Activated naive CD4-positive, alpha-beta T cell treated with anti-CD3 and anti-CD28 coated beads for 36 hours (primary cell): ENCODE measurements at regions of chr11 and their contacts with region 1.

Region 1: GRCh38 chr11:76680518-76681425 is 10.2 kb upstream of the LRRC32 start:
- DNase-seq: peak; percentile 80
- H3K4me3 Mint-ChIP-seq: no peak overlapping the region
- H3K27ac Mint-ChIP-seq: no peak overlapping the region
- H3K4me1 Mint-ChIP-seq: peaks cover 2% of the 10 kb centered on the region
- H3K27me3 Mint-ChIP-seq: peaks cover 5% of the 10 kb centered on the region

Region 2: GRCh38 chr11:76419896-76420295 is 260.9 kb before region 1 on chr11:
- CTCF ChIA-PET with region 1: no interaction called
- intact Hi-C with region 1: loop called (anchors 2 kb)
- DNase-seq: peak; percentile 32
- H3K4me3 Mint-ChIP-seq: no peak overlapping the region
- H3K27ac Mint-ChIP-seq: no peak overlapping the region
- H3K4me1 Mint-ChIP-seq: peaks cover 7% of the 10 kb centered on the region
- H3K27me3 Mint-ChIP-seq: peaks cover 5% of the 10 kb centered on the region

Region 3: DNA sequence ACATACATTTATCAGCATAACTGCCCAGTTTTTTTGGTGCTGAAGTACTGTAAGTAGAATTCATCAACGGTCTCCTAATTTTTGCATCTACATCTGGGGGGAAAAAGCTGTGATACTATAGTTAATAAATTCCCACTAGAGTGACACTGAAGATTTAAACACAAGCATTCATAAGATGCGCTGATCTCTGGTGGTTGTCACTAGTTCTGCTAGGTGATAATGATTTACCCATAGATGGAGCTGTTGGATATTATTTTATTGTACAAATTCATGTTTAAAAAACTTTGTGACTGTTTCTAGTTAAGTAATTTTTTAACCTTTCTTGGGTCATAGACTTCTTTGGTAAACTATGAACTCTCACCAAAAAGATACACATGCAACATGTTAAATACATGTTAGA is 129.4 kb before region 1 on chr11:
- CTCF ChIA-PET with region 1: no interaction called
- intact Hi-C with region 1: loop called (anchors 5 kb)
- DNase-seq: no peak
- H3K4me3 Mint-ChIP-seq: no peak overlapping the region
- H3K27ac Mint-ChIP-seq: no peak overlapping the region
- H3K4me1 Mint-ChIP-seq: peaks cover 3% of the 10 kb centered on the region
- H3K27me3 Mint-ChIP-seq: no peaks in the 10 kb centered on the region

Region 4: DNA sequence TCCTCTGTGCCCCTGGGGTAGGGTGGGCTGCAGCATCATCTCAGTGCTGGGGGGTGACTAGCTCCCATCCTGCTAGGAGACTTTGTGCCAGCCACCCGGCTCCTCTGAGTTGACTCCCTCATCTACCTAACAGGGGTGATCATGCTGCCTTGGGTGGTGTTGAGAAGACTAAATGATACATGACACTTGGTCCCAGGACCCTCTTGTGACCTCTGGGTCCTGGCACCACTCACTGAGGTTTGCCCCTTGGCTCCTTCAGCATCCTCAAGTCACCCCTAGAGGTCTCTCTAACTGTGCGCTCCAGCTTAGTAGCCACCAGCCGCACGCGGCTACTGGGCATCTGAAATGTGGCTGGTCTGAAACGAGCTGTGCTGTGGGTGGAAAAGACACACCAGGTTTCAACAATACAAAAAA is 82.3 kb before region 1 on chr11:
- CTCF ChIA-PET with region 1: interaction called, 12 read pairs
- intact Hi-C with region 1: loop called (anchors 1 kb)
- DNase-seq: peak; percentile 24
- H3K4me3 Mint-ChIP-seq: no peak overlapping the region
- H3K27ac Mint-ChIP-seq: no peak overlapping the region
- H3K4me1 Mint-ChIP-seq: no peaks in the 10 kb centered on the region
- H3K27me3 Mint-ChIP-seq: peaks cover 7% of the 10 kb centered on the region

Region 5: DNA sequence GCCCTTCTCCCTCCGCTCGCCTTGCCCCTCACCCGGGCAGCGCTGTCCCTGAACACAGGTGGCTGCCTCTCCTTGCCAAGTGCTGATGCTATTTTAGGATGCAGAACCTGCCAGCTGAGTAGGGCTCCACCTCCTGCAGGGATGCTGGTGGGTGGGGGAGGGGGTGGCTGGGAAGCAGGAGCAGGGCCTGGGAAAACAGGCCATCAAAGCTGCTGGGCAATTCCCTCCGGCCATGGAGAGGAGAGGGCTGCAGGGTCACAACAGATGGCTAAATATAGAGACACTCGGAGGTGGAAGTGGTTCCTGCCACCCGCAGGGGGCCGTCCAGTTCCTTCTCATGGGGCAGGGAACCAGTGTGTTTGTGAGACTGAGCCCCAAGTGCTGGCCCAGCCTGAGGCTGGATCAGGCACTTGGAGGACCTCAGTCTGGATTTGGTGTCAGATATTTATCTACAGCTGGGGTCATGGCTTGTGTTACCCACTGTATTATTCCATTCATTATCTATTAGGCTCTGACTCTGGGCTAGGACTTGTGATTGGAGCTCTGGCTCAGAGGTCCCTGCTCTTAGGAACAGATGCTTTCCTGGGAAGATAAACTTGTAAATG is 69.8 kb before region 1 on chr11:
- CTCF ChIA-PET with region 1: no interaction called
- intact Hi-C with region 1: loop called (anchors 5 kb)
- DNase-seq: no peak
- H3K4me3 Mint-ChIP-seq: no peak overlapping the region
- H3K27ac Mint-ChIP-seq: no peak overlapping the region
- H3K4me1 Mint-ChIP-seq: no peaks in the 10 kb centered on the region
- H3K27me3 Mint-ChIP-seq: no peaks in the 10 kb centered on the region

Region 6: DNA sequence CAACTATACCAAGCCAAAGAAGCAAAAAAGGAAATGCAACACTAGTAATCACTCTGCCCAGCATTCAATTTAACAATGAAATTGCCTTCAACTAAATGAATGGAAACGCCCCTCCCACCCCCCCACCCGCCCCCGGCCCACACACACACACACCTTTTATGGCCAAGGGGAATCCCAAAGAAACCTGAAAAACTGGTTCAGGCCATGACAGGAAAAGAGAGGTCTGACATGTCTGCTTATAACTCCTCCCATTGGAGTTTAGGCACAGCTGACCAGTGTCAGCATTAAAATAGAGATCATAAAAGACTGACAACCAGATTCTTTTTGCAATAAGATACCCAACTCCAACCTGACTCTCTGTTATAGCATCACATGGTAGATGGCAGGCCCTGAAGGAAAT is 222.6 kb after region 1 on chr11:
- CTCF ChIA-PET with region 1: no interaction called
- intact Hi-C with region 1: no loop called
- DNase-seq: no peak
- H3K4me3 Mint-ChIP-seq: no peak overlapping the region
- H3K27ac Mint-ChIP-seq: no peak overlapping the region
- H3K4me1 Mint-ChIP-seq: no peaks in the 10 kb centered on the region
- H3K27me3 Mint-ChIP-seq: no peaks in the 10 kb centered on the region